ENCODE measurements at regions of chr1 and their contacts with region 1.

Region 1: GRCh38 chr1:155084722-155085503 is 6.3 kb downstream of the EFNA3 start:
- DNase-seq: peak; percentile 98
- H3K4me3 Mint-ChIP-seq: peak overlapping the region; percentile 100
- H3K27ac Mint-ChIP-seq: peak overlapping the region; percentile 96
- H3K4me1 Mint-ChIP-seq: peaks cover 28% of the 10 kb centered on the region
- H3K27me3 Mint-ChIP-seq: peaks cover 19% of the 10 kb centered on the region
- CTCF ChIP-seq: peak; percentile 89

Region 2: GRCh38 chr1:154558575-154559465 is 526.1 kb before region 1 on chr1 and contains the start of gene UBE2Q1:
- CTCF ChIA-PET with region 1: interaction called, 8 read pairs
- POLR2A ChIA-PET with region 1: interaction called, 9 read pairs
- intact Hi-C with region 1: loop called (anchors 1 kb)
- DNase-seq: peak; percentile 99
- H3K4me3 Mint-ChIP-seq: peak within 1 kb of the TSS; percentile 76
- H3K27ac Mint-ChIP-seq: peak within 1 kb of the TSS; percentile 65
- H3K4me1 Mint-ChIP-seq: peaks cover 18% of the 10 kb centered on the region
- H3K27me3 Mint-ChIP-seq: no peaks in the 10 kb centered on the region
- CTCF ChIP-seq: no peak
- total RNA-seq, gene UBE2Q1: 103 and 111 TPM in 2 replicates

Region 3: GRCh38 chr1:154943649-154944400 is 141.1 kb before region 1 on chr1:
- CTCF ChIA-PET with region 1: interaction called, 10 read pairs
- POLR2A ChIA-PET with region 1: no interaction called
- intact Hi-C with region 1: no loop called
- DNase-seq: peak; percentile 66
- H3K4me3 Mint-ChIP-seq: no peak overlapping the region
- H3K27ac Mint-ChIP-seq: no peak overlapping the region
- H3K4me1 Mint-ChIP-seq: peaks cover 12% of the 10 kb centered on the region
- H3K27me3 Mint-ChIP-seq: no peaks in the 10 kb centered on the region
- CTCF ChIP-seq: peak; percentile 91

Region 4: GRCh38 chr1:154982897-154983648 is 101.8 kb before region 1 on chr1 and contains the start of gene FLAD1:
- CTCF ChIA-PET with region 1: interaction called, 19 read pairs
- POLR2A ChIA-PET with region 1: interaction called, 8 read pairs
- intact Hi-C with region 1: no loop called
- DNase-seq: peak; percentile 100
- H3K4me3 Mint-ChIP-seq: no peak within 1 kb of the TSS
- H3K27ac Mint-ChIP-seq: no peak within 1 kb of the TSS
- H3K4me1 Mint-ChIP-seq: peaks cover 6% of the 10 kb centered on the region
- H3K27me3 Mint-ChIP-seq: no peaks in the 10 kb centered on the region
- CTCF ChIP-seq: no peak
- total RNA-seq, gene FLAD1: 65.4 and 91.1 TPM in 2 replicates

Region 5: DNA sequence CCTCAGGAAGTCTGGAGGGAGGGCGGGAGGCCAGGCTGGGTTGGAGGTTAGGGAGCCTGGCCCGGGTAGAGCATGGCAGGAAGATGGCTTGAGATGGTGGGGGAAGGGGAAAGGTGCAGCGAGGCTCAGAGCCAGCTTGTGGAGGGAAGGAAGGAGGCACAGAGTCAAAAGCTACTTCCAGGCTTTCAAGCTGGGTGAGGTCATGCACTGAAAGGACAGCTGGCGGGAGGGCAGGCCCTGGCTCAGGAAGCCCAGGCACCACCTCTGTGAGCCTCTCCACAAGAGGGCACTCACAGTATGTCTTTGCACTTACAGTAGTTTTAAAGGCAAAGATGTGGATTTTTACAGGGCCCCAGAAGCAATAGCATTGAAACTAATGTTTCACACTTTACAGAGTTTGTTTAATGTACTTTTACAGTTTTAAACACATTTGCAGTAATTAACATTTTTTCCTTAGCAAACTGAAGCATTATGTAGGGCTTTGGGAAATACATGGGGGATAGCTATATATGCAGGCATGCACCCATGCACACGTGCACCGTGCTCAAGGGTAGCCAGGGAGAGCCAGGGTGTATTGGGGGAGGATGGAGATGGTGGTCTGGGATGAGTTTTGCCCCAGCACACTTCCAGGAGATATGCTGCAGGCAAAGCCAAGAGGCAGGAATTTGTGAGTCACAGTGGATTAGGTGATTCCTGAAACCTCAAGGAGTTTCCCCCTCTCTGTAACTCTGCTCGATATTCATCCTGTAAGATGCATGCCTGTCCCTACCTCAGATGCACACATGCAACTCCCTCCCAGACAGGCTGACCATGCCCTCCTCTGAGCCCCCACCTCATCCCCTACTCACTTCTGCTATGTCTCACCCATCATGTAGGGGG is 39.9 kb before region 1 on chr1:
- CTCF ChIA-PET with region 1: interaction called, 71 read pairs
- POLR2A ChIA-PET with region 1: interaction called, 8 read pairs
- intact Hi-C with region 1: loop called (anchors 1 kb)
- DNase-seq: peak; percentile 90
- H3K4me3 Mint-ChIP-seq: no peak overlapping the region
- H3K27ac Mint-ChIP-seq: no peak overlapping the region
- H3K4me1 Mint-ChIP-seq: peaks cover 37% of the 10 kb centered on the region
- H3K27me3 Mint-ChIP-seq: no peaks in the 10 kb centered on the region
- CTCF ChIP-seq: peak; percentile 83

Region 6: GRCh38 chr1:155099331-155099730 is 14.4 kb after region 1 on chr1:
- CTCF ChIA-PET with region 1: interaction called, 51 read pairs
- POLR2A ChIA-PET with region 1: interaction called, 6 read pairs
- intact Hi-C with region 1: no loop called
- DNase-seq: no peak
- H3K4me3 Mint-ChIP-seq: no peak overlapping the region
- H3K27ac Mint-ChIP-seq: no peak overlapping the region
- H3K4me1 Mint-ChIP-seq: peaks cover 12% of the 10 kb centered on the region
- H3K27me3 Mint-ChIP-seq: peaks cover 17% of the 10 kb centered on the region
- CTCF ChIP-seq: no peak

Region 7: GRCh38 chr1:155145491-155145890 is 60.6 kb after region 1 on chr1:
- CTCF ChIA-PET with region 1: interaction called, 161 read pairs
- POLR2A ChIA-PET with region 1: no interaction called
- intact Hi-C with region 1: no loop called
- DNase-seq: no peak
- H3K4me3 Mint-ChIP-seq: no peak overlapping the region
- H3K27ac Mint-ChIP-seq: no peak overlapping the region
- H3K4me1 Mint-ChIP-seq: no peaks in the 10 kb centered on the region
- H3K27me3 Mint-ChIP-seq: peaks cover 8% of the 10 kb centered on the region
- CTCF ChIP-seq: peak; percentile 12

Region 8: DNA sequence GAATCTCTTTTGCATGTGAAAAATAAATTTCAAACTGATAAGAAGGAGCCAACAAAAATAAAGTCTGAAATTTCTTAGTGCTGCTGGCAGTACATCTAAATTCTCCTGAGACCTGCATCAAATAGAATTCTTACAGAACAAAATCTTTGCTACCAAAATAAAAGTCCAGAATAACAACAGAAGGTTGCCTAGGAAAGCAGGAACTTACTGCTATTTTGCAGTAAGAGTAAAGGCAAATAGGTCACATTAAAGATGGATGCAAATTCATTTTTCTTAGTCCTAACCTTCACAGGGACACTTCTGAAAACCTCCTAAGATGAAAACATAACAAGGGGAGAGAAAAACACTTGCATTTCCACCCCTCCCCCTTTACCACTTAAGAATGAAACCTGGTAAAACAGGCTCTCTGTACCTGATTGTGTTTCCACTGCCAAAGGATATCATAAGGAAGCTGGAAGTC is 294.7 kb after region 1 on chr1:
- CTCF ChIA-PET with region 1: no interaction called
- POLR2A ChIA-PET with region 1: no interaction called
- intact Hi-C with region 1: no loop called
- DNase-seq: peak; percentile 27
- H3K4me3 Mint-ChIP-seq: no peak overlapping the region
- H3K27ac Mint-ChIP-seq: peak overlapping the region; percentile 23
- H3K4me1 Mint-ChIP-seq: peaks cover 6% of the 10 kb centered on the region
- H3K27me3 Mint-ChIP-seq: no peaks in the 10 kb centered on the region
- CTCF ChIP-seq: no peak